Naive thymus-derived CD4-positive, alpha-beta T cell (primary cell): ENCODE measurements at regions of chr18 and their contacts with region 1.

Region 1: GRCh38 chr18:2687390-2688001 is 32.0 kb downstream of the SMCHD1 start:
- DNase-seq: no peak
- ATAC-seq: no peak
- H3K4me3 ChIP-seq: no peak overlapping the region
- H3K4me3 Mint-ChIP-seq: peak overlapping the region in 9 of 10 donors; percentile 25 to 74 (median 36)
- H3K27ac ChIP-seq: no peak overlapping the region
- H3K27ac Mint-ChIP-seq: peak overlapping the region; percentile 22 to 81 (median 74)
- H3K4me1 ChIP-seq: peaks cover 11 to 29% of the 10 kb centered on the region in 2 donors
- H3K4me1 Mint-ChIP-seq: peaks cover 47 to 82% (median 77%) of the 10 kb centered on the region in 7 donors
- H3K27me3 ChIP-seq: no peaks in the 10 kb centered on the region
- H3K27me3 Mint-ChIP-seq: no peaks in the 10 kb centered on the region

Region 2: GRCh38 chr18:2368102-2368501 is 319.4 kb before region 1 on chr18:
- CTCF ChIA-PET with region 1: no interaction called
- POLR2A ChIA-PET with region 1: no interaction called
- intact Hi-C with region 1: no loop called
- DNase-seq: no peak
- ATAC-seq: no peak
- H3K4me3 ChIP-seq: no peak overlapping the region
- H3K4me3 Mint-ChIP-seq: no peak overlapping the region
- H3K27ac ChIP-seq: no peak overlapping the region
- H3K27ac Mint-ChIP-seq: no peak overlapping the region
- H3K4me1 ChIP-seq: no peaks in the 10 kb centered on the region
- H3K4me1 Mint-ChIP-seq: no peaks in the 10 kb centered on the region
- H3K27me3 ChIP-seq: no peaks in the 10 kb centered on the region
- H3K27me3 Mint-ChIP-seq: peaks cover 3 to 28% (median 20%) of the 10 kb centered on the region in 5 donors

Region 3: DNA sequence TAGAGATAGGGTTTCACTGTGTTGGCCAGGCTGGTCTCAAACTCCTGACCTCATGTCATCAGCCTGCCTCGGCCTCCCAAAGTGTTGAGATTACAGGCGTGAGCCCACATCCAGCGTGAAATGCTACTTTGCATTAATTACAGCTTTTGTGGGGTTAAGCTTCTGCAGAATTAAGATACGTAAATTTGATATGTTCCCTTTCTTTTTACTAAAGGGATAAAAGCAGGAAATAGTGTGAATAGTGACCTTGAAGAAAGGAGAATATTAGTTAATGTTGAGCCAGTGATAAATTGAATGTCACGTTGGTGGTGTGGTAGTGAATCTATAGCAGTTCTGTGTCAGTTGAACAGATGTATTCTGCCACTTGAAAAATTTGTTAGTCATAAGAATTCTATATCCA is 15.1 kb before region 1 on chr18:
- CTCF ChIA-PET with region 1: interaction called, 3 read pairs
- POLR2A ChIA-PET with region 1: interaction called, 6 read pairs
- intact Hi-C with region 1: loop called in 1 of 2 experiments (anchors 1 kb)
- DNase-seq: no peak
- ATAC-seq: no peak
- H3K4me3 ChIP-seq: no peak overlapping the region
- H3K4me3 Mint-ChIP-seq: peak overlapping the region in 2 of 10 donors; percentile 37 to 41
- H3K27ac ChIP-seq: no peak overlapping the region
- H3K27ac Mint-ChIP-seq: peak overlapping the region in 3 of 9 donors; percentile 17 to 85 (median 71)
- H3K4me1 ChIP-seq: peaks cover 0 to 10% of the 10 kb centered on the region in 2 donors
- H3K4me1 Mint-ChIP-seq: peaks cover 35 to 84% (median 79%) of the 10 kb centered on the region in 7 donors
- H3K27me3 ChIP-seq: no peaks in the 10 kb centered on the region
- H3K27me3 Mint-ChIP-seq: no peaks in the 10 kb centered on the region

Region 4: DNA sequence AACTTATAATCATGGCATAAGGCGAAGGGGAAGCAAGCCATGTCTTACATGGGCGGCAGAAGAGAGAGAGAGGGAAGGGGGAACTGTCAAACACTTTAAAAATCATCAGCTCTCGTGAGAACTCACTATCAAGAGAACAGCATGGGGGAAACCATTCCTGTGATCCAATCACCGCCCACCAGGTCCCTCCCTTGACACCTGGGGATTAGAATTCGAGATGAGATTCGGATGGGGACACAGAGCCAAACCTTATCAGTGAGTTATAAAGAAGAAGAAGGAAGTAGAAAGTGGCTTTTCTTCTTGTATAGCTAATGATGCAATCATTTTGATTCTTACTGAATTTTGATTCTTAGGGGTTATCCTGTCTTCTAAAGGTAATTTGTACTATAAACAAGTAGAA is 19.4 kb after region 1 on chr18:
- CTCF ChIA-PET with region 1: no interaction called
- POLR2A ChIA-PET with region 1: interaction called, 5 read pairs
- intact Hi-C with region 1: loop called in 1 of 2 experiments (anchors 2 kb)
- DNase-seq: no peak
- ATAC-seq: no peak
- H3K4me3 ChIP-seq: no peak overlapping the region
- H3K4me3 Mint-ChIP-seq: no peak overlapping the region
- H3K27ac ChIP-seq: no peak overlapping the region
- H3K27ac Mint-ChIP-seq: peak overlapping the region in 8 of 9 donors; percentile 12 to 87 (median 38)
- H3K4me1 ChIP-seq: no peaks in the 10 kb centered on the region
- H3K4me1 Mint-ChIP-seq: peaks cover 12 to 54% (median 47%) of the 10 kb centered on the region in 7 donors
- H3K27me3 ChIP-seq: no peaks in the 10 kb centered on the region
- H3K27me3 Mint-ChIP-seq: no peaks in the 10 kb centered on the region

Region 5: GRCh38 chr18:4672152-4672551 is 1984.7 kb after region 1 on chr18:
- CTCF ChIA-PET with region 1: no interaction called
- POLR2A ChIA-PET with region 1: no interaction called
- intact Hi-C with region 1: no loop called
- DNase-seq: no peak
- ATAC-seq: no peak
- H3K4me3 ChIP-seq: no peak overlapping the region
- H3K4me3 Mint-ChIP-seq: no peak overlapping the region
- H3K27ac ChIP-seq: no peak overlapping the region
- H3K27ac Mint-ChIP-seq: no peak overlapping the region
- H3K4me1 ChIP-seq: no peaks in the 10 kb centered on the region
- H3K4me1 Mint-ChIP-seq: no peaks in the 10 kb centered on the region
- H3K27me3 ChIP-seq: no peaks in the 10 kb centered on the region
- H3K27me3 Mint-ChIP-seq: no peaks in the 10 kb centered on the region